GM13976 (cell line): ENCODE measurements at regions of chr5 and their contacts with region 1.

Region 1: GRCh38 chr5:78899922-78900362 is 85.2 kb downstream of the ARSB start:
- DNase-seq: peak; percentile 49
- CTCF ChIP-seq: peak; percentile 39

Region 2: GRCh38 chr5:78964887-78965286 is 64.9 kb after region 1 on chr5:
- in situ Hi-C with region 1: loop called (anchors 5 kb)
- DNase-seq: peak; percentile 51
- CTCF ChIP-seq: peak; percentile 11

Region 3: DNA sequence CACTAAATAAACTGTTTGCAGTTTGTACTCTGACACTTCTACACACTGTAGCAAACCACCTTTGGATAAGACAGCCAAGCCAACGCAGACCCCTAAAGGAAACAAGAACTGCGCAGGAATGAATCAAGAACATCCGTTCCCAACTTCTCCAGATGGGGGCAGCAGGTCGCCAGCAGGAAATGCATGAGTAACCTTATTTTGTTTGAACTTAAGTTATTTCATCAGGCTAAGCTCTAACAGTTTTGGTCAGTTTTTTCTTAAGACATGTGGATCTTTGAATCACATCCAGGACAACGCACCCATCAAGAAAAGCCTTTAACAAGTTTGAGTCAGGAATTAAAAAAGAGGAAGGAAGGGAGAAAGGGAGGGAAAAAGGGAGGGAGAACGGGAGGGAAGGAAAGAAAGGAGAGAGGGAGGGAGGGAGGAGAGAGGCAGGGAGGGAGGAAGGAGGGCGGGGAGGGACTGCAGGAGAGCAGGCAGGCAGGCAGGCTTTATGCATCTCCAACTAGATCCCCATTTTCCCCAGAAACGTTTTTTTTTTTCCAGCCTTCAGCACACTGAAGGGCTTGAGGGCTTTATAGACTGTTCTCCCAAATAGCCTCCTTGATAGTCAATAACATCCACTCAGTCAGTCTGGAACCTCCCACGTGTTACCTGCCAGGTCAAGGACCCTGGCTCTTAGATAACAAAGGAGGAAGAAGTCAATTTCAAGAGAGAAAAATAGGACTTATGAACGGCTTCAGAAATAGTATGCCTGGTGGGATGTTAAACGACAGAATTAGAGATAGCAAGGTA is 233.9 kb after region 1 on chr5:
- in situ Hi-C with region 1: loop called (anchors 10 kb)
- DNase-seq: peak; percentile 69
- CTCF ChIP-seq: peak; percentile 73